HCT116 (cell line): ENCODE measurements at regions of chr10 and their contacts with region 1.

Region 1: DNA sequence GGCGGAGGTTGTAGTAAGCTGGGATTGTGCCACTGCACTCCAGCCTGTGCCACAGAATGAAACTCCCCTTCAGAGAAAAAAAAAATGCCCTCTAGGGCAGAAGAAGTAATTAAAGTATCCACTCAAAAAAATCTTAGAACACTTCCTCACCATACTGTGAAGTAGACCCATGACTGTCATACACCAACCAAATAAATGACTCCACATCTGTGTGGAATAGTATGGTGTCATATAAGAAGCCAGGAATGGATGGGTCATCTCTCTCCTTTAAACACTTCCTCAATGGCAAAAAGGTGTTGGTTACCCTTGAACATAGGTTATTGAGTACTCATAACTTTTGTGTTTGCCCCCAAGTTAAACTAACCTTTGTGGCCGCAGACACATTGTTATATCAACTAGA is 48.1 kb upstream of the PCGF5 start:
- DNase-seq: no peak
- ATAC-seq: no peak
- H3K4me3 ChIP-seq: no peak overlapping the region
- H3K27ac ChIP-seq: no peak overlapping the region
- H3K4me1 ChIP-seq: no peaks in the 10 kb centered on the region
- H3K27me3 ChIP-seq: no peaks in the 10 kb centered on the region
- CTCF ChIP-seq: no peak
- POLR2A ChIP-seq: no peak
- RAD21 ChIP-seq: no peak

Region 2: DNA sequence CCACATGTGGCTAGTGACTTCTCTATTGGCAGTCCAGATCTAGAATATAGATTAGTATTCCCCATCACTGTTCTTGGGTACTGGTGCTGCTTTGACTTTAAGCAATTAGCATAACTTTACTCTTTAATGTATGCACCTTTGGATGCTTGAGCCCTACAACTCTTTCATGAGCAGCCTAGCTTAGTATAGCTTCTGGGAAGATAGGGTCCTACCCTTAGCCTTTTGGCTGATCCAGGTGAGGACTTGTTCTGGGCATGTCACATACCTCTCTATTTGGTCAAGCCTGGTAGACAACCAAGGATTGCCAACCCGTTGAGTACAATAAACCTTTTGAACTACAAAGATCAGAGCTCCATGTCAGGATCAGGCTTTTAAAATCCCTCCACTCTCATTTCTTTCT is 65.8 kb after region 1 on chr10:
- CTCF ChIA-PET with region 1: no interaction called
- POLR2A ChIA-PET with region 1: no interaction called
- RAD21 ChIA-PET with region 1: no interaction called
- intact Hi-C with region 1: loop called (anchors 5 kb)
- DNase-seq: no peak
- ATAC-seq: no peak
- H3K4me3 ChIP-seq: no peak overlapping the region
- H3K27ac ChIP-seq: no peak overlapping the region
- H3K4me1 ChIP-seq: no peaks in the 10 kb centered on the region
- H3K27me3 ChIP-seq: no peaks in the 10 kb centered on the region
- CTCF ChIP-seq: no peak
- POLR2A ChIP-seq: no peak
- RAD21 ChIP-seq: no peak